PC-9 (cell line): ENCODE measurements at regions of chr16 and their contacts with region 1.

Region 1: DNA sequence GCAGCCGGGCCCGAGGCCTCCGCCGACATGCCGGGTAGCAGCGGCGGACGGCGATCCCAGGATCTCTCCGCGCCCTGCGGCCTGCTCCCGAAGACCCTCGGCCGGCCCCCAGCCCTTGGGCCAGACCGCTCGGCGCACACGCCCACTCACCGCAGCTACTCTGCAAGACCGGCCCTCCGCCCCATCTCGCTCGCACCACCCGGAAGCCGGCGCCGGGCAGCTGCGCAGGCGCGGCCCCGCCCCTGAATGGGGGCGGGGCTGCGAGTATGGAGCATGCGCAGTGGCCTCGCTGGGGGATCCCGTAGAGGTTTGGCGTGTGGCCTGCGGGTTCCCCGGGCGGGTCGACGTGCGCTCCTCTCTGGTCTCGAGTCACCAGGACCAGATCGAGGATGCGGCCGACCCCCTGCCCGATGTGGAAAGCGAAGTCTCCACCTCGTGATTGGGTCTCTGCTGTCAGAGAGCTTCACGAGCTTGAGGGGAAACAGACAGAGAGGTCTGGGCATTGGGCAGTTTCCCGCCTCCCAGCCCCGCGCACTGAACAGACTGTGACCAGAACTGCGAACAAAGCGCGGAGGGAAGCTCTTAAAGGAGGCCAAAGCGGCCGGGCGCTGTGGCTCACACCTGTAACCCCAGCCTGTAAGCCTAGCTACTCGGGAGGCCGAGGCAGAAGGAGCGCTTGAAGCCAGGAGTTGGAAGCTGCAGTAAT is at the start of gene KCTD13:
- DNase-seq: peak; percentile 70 to 97
- H3K4me3 ChIP-seq: peak within 1 kb of the TSS; percentile 84
- H3K27ac ChIP-seq: peak within 1 kb of the TSS; percentile 46
- H3K4me1 ChIP-seq: peaks cover 23% of the 10 kb centered on the region
- H3K27me3 ChIP-seq: no peaks in the 10 kb centered on the region
- CTCF ChIP-seq: no peak
- total RNA-seq, gene KCTD13: 52.7 and 72.0 TPM in 2 replicates

Region 2: DNA sequence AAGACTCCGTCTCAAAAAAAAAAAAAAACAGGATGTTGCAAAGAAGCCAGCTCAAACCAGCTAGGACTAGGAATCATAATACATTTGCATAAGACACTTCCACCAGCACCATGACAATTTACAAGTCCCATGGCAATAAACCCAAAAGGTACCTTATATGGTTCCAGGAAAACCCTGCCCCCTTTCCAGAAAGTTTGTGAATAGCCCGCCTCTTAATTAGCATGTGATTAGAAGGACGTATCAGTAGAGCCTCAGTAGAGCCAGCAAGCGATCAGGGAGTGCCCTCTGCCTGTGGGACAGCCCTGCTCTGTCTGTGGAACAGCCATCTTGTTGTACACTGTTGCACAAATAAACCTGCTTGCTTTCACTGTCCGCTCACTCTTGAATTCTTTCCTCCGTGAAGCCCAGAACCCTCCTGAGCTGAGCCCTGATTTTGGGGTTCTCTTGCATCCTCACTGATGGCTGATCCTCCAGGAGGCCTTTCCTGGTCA is 1401.4 kb before region 1 on chr16:
- CTCF ChIA-PET with region 1: no interaction called
- POLR2A ChIA-PET with region 1: interaction called, 10 read pairs
- intact Hi-C with region 1: no loop called
- DNase-seq: no peak
- H3K4me3 ChIP-seq: no peak overlapping the region
- H3K27ac ChIP-seq: no peak overlapping the region
- H3K4me1 ChIP-seq: peaks cover 48% of the 10 kb centered on the region
- H3K27me3 ChIP-seq: no peaks in the 10 kb centered on the region
- CTCF ChIP-seq: no peak

Region 3: DNA sequence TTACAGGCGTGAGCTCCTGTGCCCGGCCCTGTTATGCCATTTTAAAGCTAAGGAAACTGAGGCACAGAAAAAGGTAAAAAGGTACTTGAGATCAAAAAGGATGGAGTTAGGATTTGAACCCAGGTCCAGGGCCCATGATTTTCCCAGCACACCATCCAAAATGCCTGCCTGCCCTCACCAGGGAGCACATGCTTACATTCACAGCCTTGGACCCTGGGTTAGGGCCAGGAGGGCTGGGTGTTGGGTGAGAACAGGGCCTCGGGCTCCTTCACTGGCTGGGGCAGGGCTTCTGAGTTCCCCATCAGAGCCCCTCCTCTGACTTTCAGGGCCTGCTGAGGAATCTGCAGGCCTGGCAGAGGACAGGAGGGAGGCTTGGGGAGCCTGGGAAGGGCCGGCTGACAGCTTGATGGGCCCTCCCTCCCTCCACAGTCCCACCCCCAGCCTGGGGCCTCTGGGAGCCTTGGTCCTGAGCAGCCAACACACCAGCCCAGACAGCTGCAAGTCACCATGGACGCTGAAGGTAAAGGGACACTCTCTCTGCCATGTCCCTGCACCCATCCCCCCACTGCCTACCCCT is 247.4 kb before region 1 on chr16 and contains the start of gene QPRT:
- CTCF ChIA-PET with region 1: no interaction called
- POLR2A ChIA-PET with region 1: interaction called, 22 read pairs
- intact Hi-C with region 1: no loop called
- DNase-seq: peak; percentile 78 to 88
- H3K4me3 ChIP-seq: peak within 1 kb of the TSS; percentile 75
- H3K27ac ChIP-seq: peak within 1 kb of the TSS; percentile 81
- H3K4me1 ChIP-seq: peaks cover 14% of the 10 kb centered on the region
- H3K27me3 ChIP-seq: no peaks in the 10 kb centered on the region
- CTCF ChIP-seq: no peak
- total RNA-seq, gene QPRT: 247 and 310 TPM in 2 replicates

Region 4: DNA sequence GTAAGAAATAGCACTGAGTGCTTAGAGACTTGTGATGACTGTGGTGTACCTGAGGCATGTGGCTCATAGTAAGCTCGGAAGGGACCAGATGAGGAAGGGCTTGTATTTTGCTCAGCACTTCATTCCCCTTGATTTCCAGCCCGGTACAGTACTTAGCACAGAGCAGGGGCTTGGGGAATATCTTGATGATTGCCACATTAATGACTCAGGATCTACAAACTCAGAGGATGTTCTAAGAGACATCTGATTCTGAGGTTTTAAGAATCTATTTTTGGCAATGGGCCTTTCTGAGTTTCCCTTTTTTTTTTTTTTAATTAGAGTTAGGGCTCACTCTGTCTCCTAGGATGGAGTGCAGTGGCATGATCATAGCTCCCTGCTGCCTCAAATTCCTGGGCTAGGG is 16.8 kb before region 1 on chr16:
- CTCF ChIA-PET with region 1: no interaction called
- POLR2A ChIA-PET with region 1: interaction called, 10 read pairs
- intact Hi-C with region 1: no loop called
- DNase-seq: no peak
- H3K4me3 ChIP-seq: no peak overlapping the region
- H3K27ac ChIP-seq: no peak overlapping the region
- H3K4me1 ChIP-seq: no peaks in the 10 kb centered on the region
- H3K27me3 ChIP-seq: no peaks in the 10 kb centered on the region
- CTCF ChIP-seq: no peak

Region 5: DNA sequence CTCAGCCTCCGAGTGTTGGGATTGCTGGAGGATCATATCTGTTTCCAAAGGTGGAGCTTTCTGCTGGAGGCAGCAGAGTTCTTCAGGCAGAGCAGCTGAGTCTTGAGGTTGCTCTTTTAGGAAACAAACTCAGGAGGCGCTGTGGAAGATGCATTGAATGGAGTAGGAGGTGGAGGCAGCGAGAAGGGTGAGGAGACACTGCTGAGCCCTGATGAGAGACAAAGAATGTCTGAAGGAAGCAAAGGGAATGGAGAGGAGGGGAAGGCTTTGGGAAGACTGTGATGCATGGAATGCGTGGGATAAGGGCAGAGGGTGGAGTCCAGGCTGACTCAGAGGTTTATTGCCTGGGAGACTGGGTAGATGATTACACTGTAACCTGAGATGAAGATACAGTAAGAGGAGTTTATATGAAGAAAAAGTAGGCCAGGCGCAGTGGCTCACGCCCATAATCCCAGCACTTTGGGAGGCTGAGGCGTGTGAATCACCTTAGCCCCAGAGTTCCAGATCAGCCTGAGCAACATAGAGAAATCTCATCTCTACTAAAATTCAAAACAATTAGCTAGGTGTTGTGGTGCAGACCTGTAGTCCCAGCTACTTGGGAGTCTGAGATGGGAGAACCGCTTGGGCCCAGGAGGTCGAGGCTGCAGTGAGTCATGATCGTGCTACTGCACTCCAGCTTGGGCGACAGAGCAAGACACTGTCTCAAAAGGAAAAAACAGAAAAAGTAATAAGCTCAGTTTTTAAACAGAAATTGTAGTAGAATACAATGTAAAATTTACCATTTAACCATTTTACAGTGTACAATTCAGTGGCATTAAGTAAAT is 17.9 kb after region 1 on chr16:
- CTCF ChIA-PET with region 1: interaction called, 4 read pairs
- POLR2A ChIA-PET with region 1: interaction called, 8 read pairs
- intact Hi-C with region 1: loop called (anchors 1 kb)
- DNase-seq: peak; percentile 92 to 99
- H3K4me3 ChIP-seq: peak overlapping the region; percentile 47; the same call in 1 of the 2 replicates
- H3K27ac ChIP-seq: peak overlapping the region; percentile 94
- H3K4me1 ChIP-seq: peaks cover 26% of the 10 kb centered on the region
- H3K27me3 ChIP-seq: no peaks in the 10 kb centered on the region
- CTCF ChIP-seq: peak; percentile 69

Region 6: GRCh38 chr16:29961479-29962343 is 35.6 kb after region 1 on chr16 and contains the start of gene TMEM219:
- CTCF ChIA-PET with region 1: interaction called, 5 read pairs
- POLR2A ChIA-PET with region 1: no interaction called
- intact Hi-C with region 1: loop called (anchors 1 kb)
- DNase-seq: peak; percentile 76 to 98
- H3K4me3 ChIP-seq: peak within 1 kb of the TSS; percentile 78
- H3K27ac ChIP-seq: no peak within 1 kb of the TSS; the same call in 1 of the 2 replicates
- H3K4me1 ChIP-seq: peaks cover 11% of the 10 kb centered on the region
- H3K27me3 ChIP-seq: no peaks in the 10 kb centered on the region
- CTCF ChIP-seq: no peak; the same call in 1 of the 2 replicates
- total RNA-seq, gene TMEM219: 141 and 203 TPM in 2 replicates

Region 7: GRCh38 chr16:29995911-29996772 is 70.0 kb after region 1 on chr16 and contains the start of gene INO80E:
- CTCF ChIA-PET with region 1: interaction called, 14 read pairs
- POLR2A ChIA-PET with region 1: no interaction called
- intact Hi-C with region 1: loop called (anchors 5 kb)
- DNase-seq: peak; percentile 91 to 100
- H3K4me3 ChIP-seq: peak within 1 kb of the TSS; percentile 72
- H3K27ac ChIP-seq: peak within 1 kb of the TSS; percentile 74
- H3K4me1 ChIP-seq: peaks cover 25% of the 10 kb centered on the region
- H3K27me3 ChIP-seq: no peaks in the 10 kb centered on the region
- CTCF ChIP-seq: no peak
- total RNA-seq, gene INO80E: 102 TPM in 2 replicates